Adrenal gland (tissue), 19 donors: ENCODE measurements at regions of chr9 and their contacts with region 1.

Region 1: DNA sequence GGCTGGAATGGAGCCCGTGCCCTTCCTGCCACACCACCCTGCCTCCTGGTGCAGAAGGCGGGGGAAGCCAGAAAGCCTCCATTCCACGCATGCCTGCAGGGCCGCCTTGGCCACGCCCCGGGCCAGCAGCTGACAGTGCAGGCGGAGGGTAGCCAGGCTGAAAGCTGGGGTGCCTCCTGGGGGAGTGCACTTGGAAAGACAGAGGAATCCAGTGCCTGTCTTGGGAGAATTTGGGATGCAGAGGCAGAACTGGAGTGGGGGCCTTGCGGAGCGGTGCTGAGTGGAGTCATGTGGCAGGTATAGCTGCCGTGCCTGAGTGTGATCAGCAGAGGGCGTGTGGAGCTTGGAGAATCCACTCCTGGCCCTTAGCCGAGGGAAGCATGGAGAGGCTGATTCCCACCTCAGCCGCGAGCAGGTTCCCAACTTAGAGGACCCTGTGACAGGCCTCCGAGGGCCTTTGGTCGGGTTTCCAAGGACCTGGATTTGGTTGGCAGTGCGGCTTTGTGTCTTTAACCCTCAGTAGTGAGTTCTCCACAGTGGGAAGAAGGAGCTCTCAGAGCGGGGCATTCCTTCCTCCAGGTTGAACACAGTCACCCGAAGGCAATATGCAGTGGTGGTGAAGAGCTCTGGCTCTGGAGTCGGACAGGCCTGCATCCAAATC is 9.1 kb upstream of the URM1 start:
- DNase-seq: peak; percentile 83 to 94 (median 91)
- H3K4me3 ChIP-seq: peak overlapping the region in 2 of 4 donors; percentile 38 to 55
- H3K27ac ChIP-seq: peak overlapping the region in 2 of 5 donors; percentile 55 to 77
- H3K4me1 ChIP-seq: peaks cover 4 to 22% of the 10 kb centered on the region in 2 donors
- H3K27me3 ChIP-seq: no peaks in the 10 kb centered on the region
- CTCF ChIP-seq: peak; percentile 70 to 95 (median 92)
- POLR2A ChIP-seq: no peak

Region 2: DNA sequence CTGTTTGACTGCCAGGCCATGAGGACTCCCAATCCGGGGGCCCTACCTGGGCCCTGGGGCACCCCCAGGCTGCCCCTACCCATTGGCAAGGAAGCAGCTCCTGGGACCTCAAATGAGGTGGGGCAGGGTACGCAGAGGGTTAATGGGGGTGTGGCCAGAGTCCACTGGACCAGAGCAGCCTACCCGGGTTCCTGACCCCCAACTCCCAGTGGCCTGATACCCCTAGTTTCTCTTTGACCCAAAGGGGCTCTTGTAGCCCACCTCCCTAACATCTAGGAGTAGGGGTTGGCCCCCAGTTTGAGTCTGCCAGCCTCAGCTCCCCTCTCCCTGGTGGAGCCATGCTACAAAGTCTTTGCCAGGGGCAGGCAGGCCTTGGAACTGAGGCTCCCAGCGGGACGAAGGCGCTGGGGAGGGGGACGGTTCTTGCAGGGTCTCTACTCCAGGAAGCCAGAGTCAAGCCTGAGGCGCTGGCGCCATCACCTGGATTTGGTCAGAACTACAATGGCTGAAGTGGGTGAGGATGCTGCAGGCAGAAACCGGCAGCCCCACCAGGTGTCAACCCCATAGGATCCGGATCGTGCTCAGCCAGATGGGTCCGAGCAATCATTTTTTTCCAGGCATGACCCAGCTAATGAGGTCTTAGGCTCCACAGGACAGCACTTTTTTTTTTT is 50.1 kb after region 1 on chr9:
- intact Hi-C with region 1: loop called (anchors 5 kb)
- DNase-seq: peak in 6 of 7 donors; percentile 26 to 80 (median 52)
- H3K4me3 ChIP-seq: no peak overlapping the region
- H3K27ac ChIP-seq: no peak overlapping the region
- H3K4me1 ChIP-seq: no peaks in the 10 kb centered on the region
- H3K27me3 ChIP-seq: peaks cover 23% of the 10 kb centered on the region
- CTCF ChIP-seq: peak; percentile 24 to 66 (median 60)
- POLR2A ChIP-seq: no peak